Activated CD8-positive, alpha-beta T cell treated with anti-CD3 and anti-CD28 coated beads for 36 hours (primary cell): ENCODE measurements at regions of chr12 and their contacts with region 1.

Region 1: GRCh38 chr12:4604684-4605193 is 42.7 kb downstream of the DYRK4 start:
- DNase-seq: peak; percentile 88
- ATAC-seq: peak; percentile 100
- H3K4me3 Mint-ChIP-seq: peak overlapping the region; percentile 94
- H3K27ac Mint-ChIP-seq: peak overlapping the region; percentile 94
- H3K4me1 Mint-ChIP-seq: peaks cover 23% of the 10 kb centered on the region
- H3K27me3 Mint-ChIP-seq: peaks cover 3% of the 10 kb centered on the region
- CTCF ChIP-seq: peak; percentile 98

Region 2: GRCh38 chr12:4763549-4763948 is 158.8 kb after region 1 on chr12:
- CTCF ChIA-PET with region 1: interaction called, 12 read pairs
- POLR2A ChIA-PET with region 1: no interaction called
- intact Hi-C with region 1: loop called (anchors 10 kb)
- DNase-seq: peak; percentile 26
- ATAC-seq: peak; percentile 37
- H3K4me3 Mint-ChIP-seq: no peak overlapping the region
- H3K27ac Mint-ChIP-seq: no peak overlapping the region
- H3K4me1 Mint-ChIP-seq: peaks cover 3% of the 10 kb centered on the region
- H3K27me3 Mint-ChIP-seq: peaks cover 2% of the 10 kb centered on the region
- CTCF ChIP-seq: peak; percentile 14